Endothelial cell of umbilical vein (primary cell): ENCODE measurements at regions of chr7 and their contacts with region 1.

Region 1: DNA sequence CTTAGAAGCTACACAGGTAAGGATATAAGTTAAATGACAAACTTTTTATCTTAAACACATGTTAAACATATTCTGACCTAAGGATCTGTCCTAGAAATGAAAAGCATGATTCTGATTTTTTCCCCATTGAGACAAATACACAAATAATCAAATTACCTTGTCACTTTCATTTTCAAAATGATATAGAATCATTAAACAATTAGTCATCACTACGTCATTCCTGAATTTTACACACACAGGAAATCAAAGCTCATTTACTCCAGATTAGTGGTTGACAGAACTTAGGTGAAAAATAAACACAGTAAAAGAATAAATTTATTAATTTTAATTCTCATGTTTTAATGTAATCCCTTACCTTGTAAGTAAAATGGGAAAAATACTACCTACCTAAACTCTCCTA is 89.0 kb downstream of the AASS start:
- DNase-seq: peak; percentile 48
- H3K4me3 ChIP-seq: peak overlapping the region in 1 of 3 experiments; percentile 17
- H3K27ac ChIP-seq: no peak overlapping the region
- H3K4me1 ChIP-seq: peaks cover 8% of the 10 kb centered on the region
- H3K27me3 ChIP-seq: no peaks in the 10 kb centered on the region
- CTCF ChIP-seq: no peak
- POLR2A ChIP-seq: no peak

Region 2: DNA sequence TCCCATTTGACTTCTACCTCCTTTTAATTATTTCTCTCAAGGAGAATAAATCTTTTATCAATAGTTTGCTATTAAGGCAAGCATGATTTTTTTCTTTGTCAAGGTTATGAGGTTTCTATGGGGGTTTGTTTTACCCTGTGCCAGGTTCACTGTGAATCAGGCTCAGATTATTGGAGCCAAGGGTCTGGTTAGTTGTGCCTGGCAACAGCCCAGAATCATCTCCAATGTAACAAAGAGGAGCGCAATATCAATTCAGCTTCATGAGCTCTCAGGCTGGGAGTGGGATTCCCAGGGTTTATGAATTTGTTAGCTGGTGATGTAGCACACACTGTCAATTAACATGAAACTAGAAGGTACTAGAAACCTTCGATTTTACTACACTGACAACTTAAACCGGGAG is 15.8 kb after region 1 on chr7:
- CTCF ChIA-PET with region 1: no interaction called
- POLR2A ChIA-PET with region 1: no interaction called
- dilution Hi-C with region 1: no loop called
- intact Hi-C with region 1: loop called (anchors 2 kb)
- DNase-seq: no peak
- H3K4me3 ChIP-seq: no peak overlapping the region
- H3K27ac ChIP-seq: no peak overlapping the region
- H3K4me1 ChIP-seq: no peaks in the 10 kb centered on the region
- H3K27me3 ChIP-seq: no peaks in the 10 kb centered on the region
- CTCF ChIP-seq: no peak
- POLR2A ChIP-seq: no peak